CD4-positive, alpha-beta T cell (primary cell): ENCODE measurements at regions of chr9 and their contacts with region 1.

Region 1: GRCh38 chr9:89522261-89522958 is 24.5 kb upstream of the SEMA4D start:
- DNase-seq: peak; percentile 54 to 94 (median 68)
- ATAC-seq: peak; percentile 85
- H3K4me3 ChIP-seq: peak overlapping the region; percentile 29
- H3K4me3 Mint-ChIP-seq: peak overlapping the region; percentile 69
- H3K27ac ChIP-seq: peak overlapping the region; percentile 81 to 94
- H3K27ac Mint-ChIP-seq: peak overlapping the region; percentile 94
- H3K4me1 ChIP-seq: peaks cover 96% of the 10 kb centered on the region
- H3K4me1 Mint-ChIP-seq: peaks cover 93% of the 10 kb centered on the region
- H3K27me3 ChIP-seq: no peaks in the 10 kb centered on the region
- H3K27me3 Mint-ChIP-seq: no peaks in the 10 kb centered on the region
- CTCF ChIP-seq: no peak

Region 2: GRCh38 chr9:89304020-89304833 is 218.2 kb before region 1 on chr9:
- CTCF ChIA-PET with region 1: no interaction called
- POLR2A ChIA-PET with region 1: no interaction called
- intact Hi-C with region 1: no loop called
- DNase-seq: no peak
- ATAC-seq: no peak
- H3K4me3 ChIP-seq: no peak overlapping the region
- H3K4me3 Mint-ChIP-seq: no peak overlapping the region
- H3K27ac ChIP-seq: no peak overlapping the region
- H3K27ac Mint-ChIP-seq: no peak overlapping the region
- H3K4me1 ChIP-seq: peaks cover 1% of the 10 kb centered on the region
- H3K4me1 Mint-ChIP-seq: no peaks in the 10 kb centered on the region
- H3K27me3 ChIP-seq: no peaks in the 10 kb centered on the region
- H3K27me3 Mint-ChIP-seq: no peaks in the 10 kb centered on the region
- CTCF ChIP-seq: no peak

Region 3: DNA sequence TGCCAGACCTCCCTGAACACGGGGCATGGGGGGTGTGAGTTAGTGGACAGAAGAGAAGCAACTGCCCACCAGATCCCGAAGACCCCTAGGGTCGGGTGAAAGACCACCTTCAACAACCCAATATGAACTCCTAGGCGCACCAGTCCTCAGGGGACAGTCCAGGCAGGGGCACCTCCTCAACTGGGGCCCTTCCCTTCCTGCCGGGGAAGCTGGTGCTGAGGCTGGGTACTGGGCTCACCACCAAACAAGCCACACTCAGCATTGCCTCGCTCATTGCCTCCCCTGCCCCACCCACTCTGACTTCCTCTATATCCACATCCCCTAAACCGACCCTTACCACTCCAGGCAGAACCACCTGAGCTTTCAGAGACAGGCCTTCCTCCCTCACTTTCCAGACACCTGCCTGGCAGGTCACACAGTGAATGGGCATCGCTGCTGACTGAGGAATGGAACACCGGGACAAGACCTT is 67.0 kb before region 1 on chr9:
- CTCF ChIA-PET with region 1: no interaction called
- POLR2A ChIA-PET with region 1: interaction called, 9 read pairs
- intact Hi-C with region 1: loop called in 1 of 2 experiments (anchors 2 kb)
- DNase-seq: peak in 8 of 14 experiments; percentile 47 to 81 (median 62)
- ATAC-seq: peak; percentile 65
- H3K4me3 ChIP-seq: peak overlapping the region; percentile 13
- H3K4me3 Mint-ChIP-seq: peak overlapping the region; percentile 71
- H3K27ac ChIP-seq: peak overlapping the region; percentile 68 to 79
- H3K27ac Mint-ChIP-seq: peak overlapping the region; percentile 96
- H3K4me1 ChIP-seq: peaks cover 86% of the 10 kb centered on the region
- H3K4me1 Mint-ChIP-seq: peaks cover 91% of the 10 kb centered on the region
- H3K27me3 ChIP-seq: no peaks in the 10 kb centered on the region
- H3K27me3 Mint-ChIP-seq: no peaks in the 10 kb centered on the region
- CTCF ChIP-seq: no peak

Region 4: DNA sequence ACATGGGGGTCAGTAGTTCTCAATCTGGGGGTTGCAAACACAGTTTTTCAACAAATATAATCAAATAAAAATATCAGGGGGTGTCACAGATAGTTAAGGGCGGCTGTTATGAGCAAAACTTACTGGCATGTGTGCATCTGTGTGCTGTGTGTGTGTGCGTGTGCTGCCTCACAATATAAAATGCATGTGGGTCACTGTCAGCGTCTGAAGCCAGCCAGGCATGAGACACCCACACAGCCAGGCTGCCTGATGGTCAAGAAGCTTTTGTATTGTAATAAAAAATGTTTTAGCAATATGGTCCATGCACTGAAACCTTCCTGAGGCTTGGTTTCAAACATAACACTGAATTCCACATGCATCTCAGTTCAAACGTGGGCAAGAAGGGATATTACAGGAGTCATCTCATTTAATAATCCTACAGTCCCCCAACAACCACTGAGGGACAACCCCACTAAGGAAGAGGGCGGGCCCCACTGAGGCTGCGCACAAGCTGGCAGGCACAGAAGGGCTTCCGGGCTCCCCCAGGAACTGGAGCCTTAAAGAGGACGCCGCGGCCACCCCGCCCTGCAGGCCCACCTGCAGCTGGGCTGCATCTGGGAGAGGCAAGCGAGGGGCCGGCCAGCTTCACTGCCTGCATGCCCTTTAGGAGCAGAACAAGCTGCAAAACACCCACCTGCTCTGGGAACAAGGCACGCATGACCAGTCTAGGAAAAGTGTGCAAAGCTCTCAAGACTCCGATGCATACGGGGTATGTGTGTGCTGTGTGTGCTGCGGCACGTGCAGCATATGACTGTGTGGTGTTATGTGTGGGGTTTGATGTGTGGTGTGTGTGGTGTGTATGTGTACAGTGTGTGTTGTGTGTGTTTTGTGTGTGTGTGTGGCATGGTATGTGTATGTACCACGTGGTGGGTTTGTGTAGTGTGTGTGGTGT is 38.6 kb before region 1 on chr9:
- CTCF ChIA-PET with region 1: no interaction called
- POLR2A ChIA-PET with region 1: interaction called, 18 read pairs
- intact Hi-C with region 1: loop called in 1 of 2 experiments (anchors 5 kb)
- DNase-seq: peak in 13 of 14 experiments; percentile 54 to 87 (median 70)
- ATAC-seq: peak; percentile 72
- H3K4me3 ChIP-seq: peak overlapping the region; percentile 72
- H3K4me3 Mint-ChIP-seq: peak overlapping the region; percentile 94
- H3K27ac ChIP-seq: peak overlapping the region; percentile 52 to 67
- H3K27ac Mint-ChIP-seq: peak overlapping the region; percentile 88
- H3K4me1 ChIP-seq: peaks cover 77% of the 10 kb centered on the region
- H3K4me1 Mint-ChIP-seq: peaks cover 91% of the 10 kb centered on the region
- H3K27me3 ChIP-seq: no peaks in the 10 kb centered on the region
- H3K27me3 Mint-ChIP-seq: no peaks in the 10 kb centered on the region
- CTCF ChIP-seq: no peak

Region 5: GRCh38 chr9:89497978-89498851 is 24.2 kb before region 1 on chr9 and contains the start of gene SEMA4D:
- CTCF ChIA-PET with region 1: interaction called, 6 read pairs
- POLR2A ChIA-PET with region 1: interaction called, 39 read pairs
- intact Hi-C with region 1: loop called in 1 of 2 experiments (anchors 1 kb)
- DNase-seq: peak in 12 of 14 experiments; percentile 37 to 84 (median 58)
- ATAC-seq: peak; percentile 4
- H3K4me3 ChIP-seq: peak within 1 kb of the TSS; percentile 83
- H3K4me3 Mint-ChIP-seq: peak within 1 kb of the TSS; percentile 100
- H3K27ac ChIP-seq: peak within 1 kb of the TSS; percentile 60 to 68
- H3K27ac Mint-ChIP-seq: peak within 1 kb of the TSS; percentile 90
- H3K4me1 ChIP-seq: peaks cover 84% of the 10 kb centered on the region
- H3K4me1 Mint-ChIP-seq: peaks cover 92% of the 10 kb centered on the region
- H3K27me3 ChIP-seq: no peaks in the 10 kb centered on the region
- H3K27me3 Mint-ChIP-seq: no peaks in the 10 kb centered on the region
- CTCF ChIP-seq: no peak
- total RNA-seq, gene SEMA4D: 399 to 430 TPM

Region 6: GRCh38 chr9:89536145-89536574 is 13.8 kb after region 1 on chr9:
- CTCF ChIA-PET with region 1: interaction called, 8 read pairs
- POLR2A ChIA-PET with region 1: interaction called, 46 read pairs
- intact Hi-C with region 1: loop called in 1 of 2 experiments (anchors 2 kb)
- DNase-seq: peak in 3 of 14 experiments; percentile 65 to 90 (median 66)
- ATAC-seq: peak; percentile 79
- H3K4me3 ChIP-seq: peak overlapping the region; percentile 11
- H3K4me3 Mint-ChIP-seq: peak overlapping the region; percentile 76
- H3K27ac ChIP-seq: peak overlapping the region; percentile 72 to 75
- H3K27ac Mint-ChIP-seq: peak overlapping the region; percentile 94
- H3K4me1 ChIP-seq: peaks cover 89% of the 10 kb centered on the region
- H3K4me1 Mint-ChIP-seq: peaks cover 95% of the 10 kb centered on the region
- H3K27me3 ChIP-seq: no peaks in the 10 kb centered on the region
- H3K27me3 Mint-ChIP-seq: no peaks in the 10 kb centered on the region
- CTCF ChIP-seq: no peak